Activated B cell treated with CpG ODN at 0.5 μM for 24 hours (primary cell): ENCODE measurements at regions of chr6 and their contacts with region 1.

Region 1: DNA sequence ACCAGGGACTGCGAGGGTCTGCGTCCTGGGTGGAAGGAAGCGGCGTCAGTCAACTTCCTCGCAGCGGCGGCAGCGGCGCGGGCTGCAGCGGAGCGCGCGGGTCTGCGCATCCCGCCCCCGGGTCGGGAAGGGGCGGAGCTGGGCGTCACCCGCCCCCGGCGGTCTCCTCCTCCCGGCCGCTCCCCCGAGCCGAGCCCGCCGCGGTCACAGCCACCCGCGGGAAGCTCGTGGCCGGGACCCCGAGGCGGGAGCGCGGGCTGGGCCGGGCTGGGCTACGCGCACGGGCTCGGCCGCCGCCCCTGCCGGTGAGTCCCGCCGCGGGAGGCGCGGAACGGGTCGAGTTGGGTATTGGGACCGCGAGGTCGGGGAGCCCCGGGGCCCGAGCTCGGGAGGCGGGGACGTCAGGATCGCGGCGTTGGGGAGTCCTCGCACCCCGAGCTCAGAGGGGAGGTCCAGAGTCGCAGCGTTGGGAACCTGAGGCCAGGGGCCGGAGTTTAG is at the start of gene PAQR8:
- DNase-seq: peak; percentile 86
- ATAC-seq: peak; percentile 93
- H3K4me3 Mint-ChIP-seq: peak within 1 kb of the TSS; percentile 97
- H3K27ac Mint-ChIP-seq: peak within 1 kb of the TSS; percentile 86
- H3K4me1 Mint-ChIP-seq: peaks cover 25% of the 10 kb centered on the region
- H3K27me3 Mint-ChIP-seq: no peaks in the 10 kb centered on the region
- CTCF ChIP-seq: no peak
- total RNA-seq, gene PAQR8: 6.8 and 8.0 TPM in 2 replicates

Region 2: DNA sequence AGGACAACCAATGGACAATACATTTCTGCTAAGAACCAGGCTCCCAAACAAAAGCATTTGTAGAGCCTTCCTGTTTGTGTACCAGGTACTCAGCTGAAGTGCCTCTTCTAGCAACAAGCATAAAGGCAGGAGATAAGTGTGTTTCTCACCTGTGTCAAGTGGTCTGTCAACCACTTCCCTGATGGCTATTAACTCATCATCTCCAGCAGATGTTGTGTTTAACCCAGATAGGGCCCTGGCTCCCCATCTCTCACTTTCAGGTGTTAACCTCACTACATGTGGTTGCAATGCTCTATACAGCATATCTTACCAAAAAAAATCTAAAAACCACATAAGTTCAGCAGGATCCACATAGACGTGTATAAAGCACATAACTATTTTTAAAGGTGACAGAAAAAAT is 185.4 kb before region 1 on chr6:
- CTCF ChIA-PET with region 1: no interaction called
- POLR2A ChIA-PET with region 1: no interaction called
- intact Hi-C with region 1: no loop called
- DNase-seq: no peak
- ATAC-seq: no peak
- H3K4me3 Mint-ChIP-seq: no peak overlapping the region
- H3K27ac Mint-ChIP-seq: no peak overlapping the region
- H3K4me1 Mint-ChIP-seq: peaks cover 3% of the 10 kb centered on the region
- H3K27me3 Mint-ChIP-seq: peaks cover 2% of the 10 kb centered on the region
- CTCF ChIP-seq: no peak

Region 3: GRCh38 chr6:52297433-52297832 is 64.6 kb before region 1 on chr6:
- CTCF ChIA-PET with region 1: interaction called, 6 read pairs
- POLR2A ChIA-PET with region 1: interaction called, 18 read pairs
- intact Hi-C with region 1: loop called (anchors 2 kb)
- DNase-seq: no peak
- ATAC-seq: peak; percentile 38
- H3K4me3 Mint-ChIP-seq: peak overlapping the region; percentile 76
- H3K27ac Mint-ChIP-seq: peak overlapping the region; percentile 99
- H3K4me1 Mint-ChIP-seq: peaks cover 38% of the 10 kb centered on the region
- H3K27me3 Mint-ChIP-seq: no peaks in the 10 kb centered on the region
- CTCF ChIP-seq: no peak

Region 4: GRCh38 chr6:52304983-52305390 is 57.0 kb before region 1 on chr6:
- CTCF ChIA-PET with region 1: interaction called, 3 read pairs
- POLR2A ChIA-PET with region 1: interaction called, 32 read pairs
- intact Hi-C with region 1: loop called (anchors 1 kb)
- DNase-seq: no peak
- ATAC-seq: peak; percentile 65
- H3K4me3 Mint-ChIP-seq: peak overlapping the region; percentile 67
- H3K27ac Mint-ChIP-seq: peak overlapping the region; percentile 95
- H3K4me1 Mint-ChIP-seq: peaks cover 68% of the 10 kb centered on the region
- H3K27me3 Mint-ChIP-seq: no peaks in the 10 kb centered on the region
- CTCF ChIP-seq: no peak

Region 5: DNA sequence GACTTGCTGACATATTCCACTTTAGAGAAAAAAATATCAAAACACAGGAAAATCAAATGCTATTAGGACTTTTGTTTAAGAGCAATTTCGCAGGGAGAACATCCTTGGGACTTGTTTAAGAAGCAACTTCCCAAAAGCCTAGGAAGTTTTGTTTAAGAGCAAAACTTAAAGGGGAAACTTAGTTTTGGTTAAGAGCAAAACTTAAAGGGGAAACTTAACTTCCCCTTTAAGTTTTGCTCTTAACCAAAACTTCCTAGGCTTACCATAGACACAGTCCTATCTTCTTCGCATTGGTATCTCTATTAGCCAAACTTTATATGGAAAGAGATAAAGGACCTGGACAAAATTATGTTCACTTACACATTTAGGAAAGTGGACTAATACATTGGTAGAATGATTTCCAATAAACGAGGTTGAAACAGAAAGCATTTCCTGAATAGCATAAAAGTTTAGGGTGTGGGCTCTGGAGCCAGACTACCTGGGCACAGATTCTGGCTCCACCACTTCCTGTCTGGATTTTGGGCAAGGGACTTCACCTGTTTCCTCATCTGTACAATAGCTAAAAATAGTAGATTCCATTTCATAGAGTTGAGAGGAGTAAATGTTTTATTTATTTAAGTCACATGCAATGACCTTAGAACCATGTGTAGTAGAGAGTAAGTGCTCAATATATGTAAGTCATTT is 15.7 kb after region 1 on chr6:
- CTCF ChIA-PET with region 1: interaction called, 4 read pairs
- POLR2A ChIA-PET with region 1: interaction called, 11 read pairs
- intact Hi-C with region 1: loop called (anchors 1 kb)
- DNase-seq: no peak
- ATAC-seq: no peak
- H3K4me3 Mint-ChIP-seq: peak overlapping the region; percentile 44
- H3K27ac Mint-ChIP-seq: peak overlapping the region; percentile 72
- H3K4me1 Mint-ChIP-seq: peaks cover 30% of the 10 kb centered on the region
- H3K27me3 Mint-ChIP-seq: no peaks in the 10 kb centered on the region
- CTCF ChIP-seq: no peak

Region 6: DNA sequence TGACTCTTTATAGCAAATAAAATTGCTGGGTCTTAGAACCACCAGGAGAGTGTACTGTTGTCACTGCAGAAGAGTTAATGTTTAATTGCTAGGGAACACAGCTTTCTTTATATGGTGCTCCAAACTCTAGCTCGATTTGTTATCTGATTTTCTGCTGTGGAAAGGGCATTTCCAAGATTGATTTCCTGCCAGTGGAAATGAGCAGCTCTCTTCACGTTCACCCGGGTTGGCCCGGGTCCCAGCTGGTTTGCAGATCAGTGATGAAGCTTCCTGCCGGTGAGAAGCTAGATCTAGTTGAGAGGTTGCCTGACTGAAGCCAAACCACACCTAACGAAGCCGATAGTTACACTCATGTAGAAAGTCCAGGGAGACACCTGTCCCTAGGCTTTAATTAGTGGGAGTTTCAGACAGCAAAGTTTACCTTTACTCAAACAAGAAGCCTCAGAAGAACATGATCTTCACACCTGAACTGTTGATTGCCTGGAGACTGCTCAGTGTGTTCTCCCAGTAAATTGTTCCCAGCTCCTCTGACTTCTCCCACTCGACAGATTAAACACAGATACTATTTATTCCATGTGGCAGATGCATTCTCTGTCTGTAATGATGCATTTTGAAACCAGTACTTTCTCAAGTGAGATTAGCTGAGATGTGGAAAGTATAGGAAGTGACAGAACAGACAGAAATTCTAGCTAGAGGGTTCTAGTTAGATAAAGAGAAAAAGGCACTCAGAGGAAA is 27.8 kb after region 1 on chr6:
- CTCF ChIA-PET with region 1: interaction called, 4 read pairs
- POLR2A ChIA-PET with region 1: interaction called, 11 read pairs
- intact Hi-C with region 1: loop called (anchors 2 kb)
- DNase-seq: no peak
- ATAC-seq: peak; percentile 26
- H3K4me3 Mint-ChIP-seq: peak overlapping the region; percentile 49
- H3K27ac Mint-ChIP-seq: peak overlapping the region; percentile 59
- H3K4me1 Mint-ChIP-seq: peaks cover 43% of the 10 kb centered on the region
- H3K27me3 Mint-ChIP-seq: no peaks in the 10 kb centered on the region
- CTCF ChIP-seq: no peak

Region 7: DNA sequence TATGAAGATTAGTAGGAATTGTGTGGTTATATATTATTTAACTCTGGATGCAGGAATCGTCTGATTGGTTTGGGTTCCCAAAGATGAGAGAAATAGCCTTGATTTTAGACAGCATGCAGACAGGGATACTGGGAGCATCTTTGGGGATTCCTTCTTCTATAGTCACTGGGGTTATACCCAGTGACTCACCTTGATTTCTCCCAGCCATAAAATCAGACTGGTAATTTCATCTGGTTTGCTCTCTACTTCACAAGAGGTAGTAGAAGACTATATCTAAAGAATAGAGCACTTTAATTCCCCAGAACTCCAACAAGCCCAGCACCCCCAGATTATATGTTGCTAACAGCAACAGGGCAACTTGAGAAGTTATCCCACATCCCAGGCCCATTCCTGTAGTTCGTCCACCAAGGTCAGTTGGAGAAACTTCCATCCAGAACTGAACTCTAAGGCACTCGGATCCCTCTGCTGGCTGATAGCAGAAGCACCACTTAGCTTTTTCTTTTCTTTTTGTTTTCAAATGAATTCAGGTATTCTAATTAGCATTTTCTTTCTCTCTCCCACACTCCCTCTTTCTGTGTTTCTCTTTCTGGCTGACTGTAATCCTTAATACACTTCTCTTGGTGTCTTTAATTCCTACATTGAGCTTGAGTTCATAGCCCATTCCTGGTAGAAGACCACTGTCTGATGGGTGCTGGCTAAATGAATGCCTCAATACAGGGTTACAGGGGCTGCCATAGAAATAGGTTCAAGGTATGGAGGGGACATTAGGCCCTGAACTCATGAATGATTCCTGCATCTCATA is 37.7 kb after region 1 on chr6:
- CTCF ChIA-PET with region 1: interaction called, 16 read pairs
- POLR2A ChIA-PET with region 1: interaction called, 9 read pairs
- intact Hi-C with region 1: loop called (anchors 1 kb)
- DNase-seq: no peak
- ATAC-seq: peak; percentile 61
- H3K4me3 Mint-ChIP-seq: no peak overlapping the region
- H3K27ac Mint-ChIP-seq: no peak overlapping the region
- H3K4me1 Mint-ChIP-seq: peaks cover 33% of the 10 kb centered on the region
- H3K27me3 Mint-ChIP-seq: no peaks in the 10 kb centered on the region
- CTCF ChIP-seq: no peak